Ascending aorta (tissue), 2 donors: ENCODE measurements at regions of chr1 and their contacts with region 1.

Region 1: DNA sequence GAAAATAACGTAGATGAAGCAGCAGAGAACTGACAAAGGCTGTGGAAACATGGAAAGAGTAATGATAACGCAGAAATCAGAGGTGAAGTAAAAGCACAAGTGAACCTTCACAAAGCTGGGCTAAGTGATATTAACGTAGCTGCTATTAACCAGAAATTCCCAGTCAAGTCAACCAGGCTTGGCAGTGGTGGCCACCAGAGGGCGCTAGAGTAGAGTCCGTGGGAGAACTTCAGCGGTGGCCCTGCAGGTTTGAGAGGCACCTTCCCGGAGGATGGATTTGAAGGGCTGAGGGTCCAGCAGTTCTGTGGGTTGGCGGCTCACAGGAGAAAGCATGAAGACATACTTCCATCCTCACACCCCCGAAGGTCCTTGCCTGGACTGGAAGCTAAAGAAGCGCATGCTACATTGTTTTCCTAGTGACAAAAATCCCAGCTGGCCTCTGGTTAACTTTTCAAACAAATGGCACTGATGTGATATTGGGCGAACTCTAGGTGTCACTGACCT is 81.7 kb upstream of the ZNF648 start:
- DNase-seq: peak; percentile 69 to 96
- H3K4me3 ChIP-seq: no peak overlapping the region
- H3K27ac ChIP-seq: peak overlapping the region; percentile 79 to 91
- H3K4me1 ChIP-seq: peaks cover 5 to 27% of the 10 kb centered on the region in 2 donors
- H3K27me3 ChIP-seq: no peaks in the 10 kb centered on the region
- CTCF ChIP-seq: peak; percentile 81 to 94 (median 87)

Region 2: GRCh38 chr1:182029379-182030331 is 113.6 kb before region 1 on chr1:
- intact Hi-C with region 1: loop called (anchors 5 kb)
- DNase-seq: peak; percentile 96 to 99
- H3K4me3 ChIP-seq: peak overlapping the region; percentile 66 to 83
- H3K27ac ChIP-seq: peak overlapping the region; percentile 75 to 76
- H3K4me1 ChIP-seq: no peaks in the 10 kb centered on the region
- H3K27me3 ChIP-seq: no peaks in the 10 kb centered on the region
- CTCF ChIP-seq: peak; percentile 26 to 60 (median 59)

Region 3: GRCh38 chr1:182198049-182198501 is 54.9 kb after region 1 on chr1:
- intact Hi-C with region 1: loop called (anchors 2 kb)
- DNase-seq: no peak
- H3K4me3 ChIP-seq: no peak overlapping the region
- H3K27ac ChIP-seq: peak overlapping the region; percentile 48 to 56
- H3K4me1 ChIP-seq: peaks cover 8 to 12% of the 10 kb centered on the region in 2 donors
- H3K27me3 ChIP-seq: no peaks in the 10 kb centered on the region
- CTCF ChIP-seq: peak in 1 of 3 experiments; percentile 16

Region 4: DNA sequence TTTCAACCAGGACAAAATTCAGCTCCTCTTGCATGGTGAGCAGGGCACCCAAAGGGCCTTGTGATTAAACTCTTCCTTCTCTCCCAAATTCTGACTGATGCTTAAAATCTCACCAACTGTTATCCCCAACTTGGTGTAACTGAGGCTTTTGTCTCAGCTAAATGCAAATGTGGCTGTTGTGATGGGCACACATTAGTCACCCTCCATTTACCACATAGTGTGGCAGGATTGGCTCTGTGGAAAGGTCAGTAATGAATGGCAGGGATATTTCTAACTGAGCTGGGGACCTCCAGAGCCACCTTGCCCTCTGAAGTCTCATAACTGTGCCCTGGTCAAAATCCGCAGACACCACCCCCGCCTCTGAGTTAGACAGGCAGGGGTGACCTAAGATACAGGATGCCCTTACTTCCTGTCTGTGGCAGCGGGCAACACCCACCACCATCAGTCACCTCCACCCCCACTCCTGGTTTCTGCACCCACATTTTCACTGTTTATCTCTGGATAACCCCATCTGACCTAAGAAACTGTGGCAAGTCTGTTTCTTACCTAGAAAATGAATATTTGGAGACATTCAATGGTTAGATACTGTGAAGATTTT is 486.4 kb after region 1 on chr1:
- intact Hi-C with region 1: no loop called
- DNase-seq: no peak
- H3K4me3 ChIP-seq: no peak overlapping the region
- H3K27ac ChIP-seq: no peak overlapping the region
- H3K4me1 ChIP-seq: no peaks in the 10 kb centered on the region
- H3K27me3 ChIP-seq: no peaks in the 10 kb centered on the region
- CTCF ChIP-seq: no peak